ENCODE measurements at regions of chr20 and their contacts with region 1.

Region 1: DNA sequence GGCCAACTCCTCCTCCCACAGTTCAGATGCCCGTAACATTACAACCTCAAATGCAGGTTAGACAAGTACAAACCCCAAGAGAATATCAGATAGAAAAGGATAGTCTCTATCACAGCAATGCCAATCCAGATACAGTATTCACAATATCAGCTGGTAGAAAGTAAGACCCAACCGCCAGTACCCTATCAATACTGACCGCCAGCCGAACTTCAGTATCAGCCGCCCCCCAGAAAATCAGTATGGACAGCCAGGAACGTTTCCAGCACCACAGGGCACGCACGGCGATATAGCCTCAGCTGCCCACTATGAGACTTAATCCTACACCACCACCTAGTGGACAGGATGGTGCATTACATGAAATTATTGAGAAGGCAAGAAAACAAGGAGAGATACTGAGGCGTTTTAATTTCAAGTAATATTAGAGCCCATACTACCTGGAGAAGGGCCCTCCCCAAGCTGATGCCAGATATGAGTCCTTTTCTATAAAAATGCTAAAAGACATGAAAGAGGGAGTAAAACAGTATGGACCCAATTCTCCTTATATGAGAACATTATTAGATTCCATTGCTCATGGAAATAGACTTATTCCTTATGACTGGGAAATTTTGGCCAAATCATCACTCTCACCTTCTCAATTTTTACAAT is 17.6 kb upstream of the EIF2S2 start:
- DNase-seq: peak; percentile 70
- ATAC-seq: peak; percentile 80

Region 2: GRCh38 chr20:33862709-33863403 is 266.8 kb before region 1 on chr20:
- intact Hi-C with region 1: loop called (anchors 1 kb)
- DNase-seq: peak; percentile 77
- ATAC-seq: peak; percentile 64

Region 3: DNA sequence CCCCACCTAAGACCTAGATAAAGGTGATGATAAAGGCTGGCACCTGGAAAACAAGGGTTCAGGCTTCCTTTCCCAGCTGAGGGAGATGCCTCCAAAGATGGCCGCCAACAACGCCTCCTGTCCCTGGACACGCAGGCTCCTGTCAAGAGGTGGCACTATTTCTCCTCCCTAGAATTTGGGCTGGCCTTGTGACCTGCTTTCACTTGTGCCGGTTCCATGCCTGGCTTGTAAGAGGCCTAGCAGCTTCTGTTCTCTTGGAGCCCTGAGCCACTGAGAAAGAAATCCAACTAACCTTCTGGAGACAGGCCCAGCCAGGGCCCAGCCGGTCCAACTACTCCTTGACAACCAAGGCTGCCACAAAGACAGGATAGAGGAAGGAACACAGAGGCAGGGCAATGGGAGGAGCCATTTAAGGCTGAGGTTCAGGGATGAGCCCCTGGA is 196.2 kb before region 1 on chr20:
- intact Hi-C with region 1: loop called (anchors 1 kb)
- DNase-seq: peak; percentile 73
- ATAC-seq: peak; percentile 92

Region 4: GRCh38 chr20:34637245-34638038 is 507.8 kb after region 1 on chr20:
- intact Hi-C with region 1: no loop called
- DNase-seq: no peak
- ATAC-seq: peak; percentile 96